WTC11 (cell line): ENCODE measurements at regions of chr5 and their contacts with region 1.

Region 1: GRCh38 chr5:139560752-139561654 is at the start of gene UBE2D2:
- DNase-seq: peak; percentile 94
- ATAC-seq: peak; percentile 97
- H3K4me3 Mint-ChIP-seq: peak within 1 kb of the TSS; percentile 100
- H3K27ac Mint-ChIP-seq: peak within 1 kb of the TSS; percentile 99
- H3K4me1 Mint-ChIP-seq: peaks cover 35% of the 10 kb centered on the region
- H3K27me3 Mint-ChIP-seq: no peaks in the 10 kb centered on the region
- CTCF ChIP-seq: no peak
- total RNA-seq, gene UBE2D2: 183 to 204 TPM (median 184 TPM) in 3 replicates

Region 2: DNA sequence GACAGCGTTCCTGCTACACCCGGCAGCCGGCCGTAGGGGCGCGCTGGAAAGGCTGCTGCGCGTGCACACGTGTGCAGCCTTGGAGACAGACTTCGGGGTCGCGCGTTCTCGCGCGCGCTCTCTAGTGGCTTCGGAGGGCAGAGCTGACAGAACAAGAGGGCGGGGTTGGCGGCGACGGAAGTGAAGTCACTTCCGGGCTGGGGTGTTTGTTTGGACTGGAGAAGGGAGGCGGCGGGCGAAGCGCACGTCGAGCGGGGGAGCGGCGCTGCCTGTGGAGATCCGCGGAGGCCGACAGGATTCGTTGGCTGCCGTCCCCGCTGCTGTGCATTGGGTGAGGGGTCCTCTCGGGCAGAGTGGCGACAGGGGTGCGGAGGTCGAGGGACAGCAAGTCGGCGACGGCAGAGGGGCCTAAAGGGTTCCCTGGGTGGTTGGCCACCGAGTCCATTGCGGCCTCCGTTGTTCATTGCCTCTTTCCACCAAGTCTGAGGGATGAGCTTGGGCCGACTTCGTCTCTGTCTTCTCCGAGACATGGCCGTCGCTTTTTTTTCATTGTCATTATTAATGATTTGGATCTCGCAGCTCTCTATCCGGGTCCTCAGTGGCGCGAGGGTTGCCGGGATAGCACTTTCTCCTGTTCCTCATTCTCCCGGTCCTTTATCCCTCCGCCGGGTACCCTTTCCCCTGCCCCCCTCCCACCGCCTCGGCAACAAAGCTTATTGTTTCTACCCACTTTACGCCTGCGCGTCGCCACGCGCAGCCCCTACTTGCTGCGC is 219.2 kb before region 1 on chr5 and contains the start of gene PAIP2:
- CTCF ChIA-PET with region 1: interaction called, 3 read pairs
- POLR2A ChIA-PET with region 1: interaction called, 10 read pairs
- DNase-seq: peak; percentile 99
- ATAC-seq: peak; percentile 88
- H3K4me3 Mint-ChIP-seq: peak within 1 kb of the TSS; percentile 97
- H3K27ac Mint-ChIP-seq: peak within 1 kb of the TSS; percentile 99
- H3K4me1 Mint-ChIP-seq: peaks cover 26% of the 10 kb centered on the region
- H3K27me3 Mint-ChIP-seq: no peaks in the 10 kb centered on the region
- CTCF ChIP-seq: no peak
- total RNA-seq, gene PAIP2: 122 to 126 TPM (median 126 TPM) in 3 replicates

Region 3: DNA sequence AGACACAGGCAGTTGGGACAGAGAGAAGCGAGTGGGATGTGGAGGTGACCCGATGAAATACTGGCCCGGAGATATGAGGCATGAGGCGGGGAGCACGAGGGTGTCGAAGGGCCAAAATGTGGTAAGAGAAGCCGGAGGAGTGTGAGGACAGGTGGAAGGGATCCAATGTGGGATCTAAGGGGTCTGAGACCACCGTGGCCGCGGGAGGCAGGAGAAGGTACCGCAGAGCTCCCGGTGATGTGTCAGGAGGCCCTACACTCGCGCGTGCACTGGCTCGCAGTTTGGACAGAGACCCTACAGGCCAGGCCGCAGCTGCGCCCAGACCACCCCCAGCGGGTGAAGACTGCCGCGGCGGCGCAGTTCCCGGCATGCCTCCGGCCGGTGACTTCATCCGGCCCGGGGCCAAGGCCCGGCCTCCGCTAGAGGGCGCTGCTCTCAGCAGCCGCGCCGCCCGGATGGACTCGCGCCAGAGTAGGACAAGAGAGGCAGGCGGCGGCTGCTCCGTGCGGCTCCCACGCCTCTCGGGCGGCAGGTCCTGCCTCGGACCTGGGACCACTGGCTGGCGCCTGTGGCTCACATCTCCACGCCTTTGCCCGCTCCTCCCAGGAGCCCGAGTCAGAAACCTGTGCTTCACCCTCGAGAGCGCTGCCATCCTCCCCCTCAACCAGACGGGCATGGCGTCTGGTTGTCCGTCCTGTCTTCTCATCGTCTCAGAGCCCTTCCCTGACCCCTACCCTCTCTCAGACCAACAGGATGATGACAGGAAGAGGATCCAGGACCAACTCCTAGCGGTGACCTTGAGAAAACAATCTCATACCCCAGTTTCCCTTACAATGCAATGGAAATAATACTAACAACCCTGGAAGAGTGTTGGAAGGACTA is 43.1 kb before region 1 on chr5:
- CTCF ChIA-PET with region 1: interaction called, 14 read pairs
- POLR2A ChIA-PET with region 1: interaction called, 12 read pairs
- DNase-seq: peak; percentile 95
- ATAC-seq: peak; percentile 87
- H3K4me3 Mint-ChIP-seq: peak overlapping the region; percentile 61
- H3K27ac Mint-ChIP-seq: peak overlapping the region; percentile 82; the same call in 1 of the 2 replicates
- H3K4me1 Mint-ChIP-seq: peaks cover 33% of the 10 kb centered on the region
- H3K27me3 Mint-ChIP-seq: peaks cover 24% of the 10 kb centered on the region
- CTCF ChIP-seq: peak; percentile 97

Region 4: GRCh38 chr5:139524932-139525585 is 35.9 kb before region 1 on chr5:
- CTCF ChIA-PET with region 1: interaction called, 14 read pairs
- POLR2A ChIA-PET with region 1: interaction called, 12 read pairs
- DNase-seq: no peak
- ATAC-seq: no peak
- H3K4me3 Mint-ChIP-seq: no peak overlapping the region; the same call in 1 of the 2 replicates
- H3K27ac Mint-ChIP-seq: no peak overlapping the region; the same call in 1 of the 2 replicates
- H3K4me1 Mint-ChIP-seq: peaks cover 71% of the 10 kb centered on the region
- H3K27me3 Mint-ChIP-seq: peaks cover 17% of the 10 kb centered on the region
- CTCF ChIP-seq: no peak

Region 5: GRCh38 chr5:139574641-139575312 is 13.8 kb after region 1 on chr5:
- CTCF ChIA-PET with region 1: interaction called, 43 read pairs
- POLR2A ChIA-PET with region 1: interaction called, 7 read pairs
- DNase-seq: no peak
- ATAC-seq: peak; percentile 74
- H3K4me3 Mint-ChIP-seq: no peak overlapping the region
- H3K27ac Mint-ChIP-seq: peak overlapping the region; percentile 96
- H3K4me1 Mint-ChIP-seq: peaks cover 32% of the 10 kb centered on the region
- H3K27me3 Mint-ChIP-seq: no peaks in the 10 kb centered on the region
- CTCF ChIP-seq: no peak

Region 6: GRCh38 chr5:139611703-139612584 is 50.9 kb after region 1 on chr5:
- CTCF ChIA-PET with region 1: interaction called, 10 read pairs
- POLR2A ChIA-PET with region 1: no interaction called
- DNase-seq: no peak
- ATAC-seq: no peak
- H3K4me3 Mint-ChIP-seq: no peak overlapping the region
- H3K27ac Mint-ChIP-seq: peak overlapping the region; percentile 70
- H3K4me1 Mint-ChIP-seq: peaks cover 3% of the 10 kb centered on the region
- H3K27me3 Mint-ChIP-seq: no peaks in the 10 kb centered on the region
- CTCF ChIP-seq: no peak